ENCODE measurements at regions of chr6 and their contacts with region 1.

Region 1: DNA sequence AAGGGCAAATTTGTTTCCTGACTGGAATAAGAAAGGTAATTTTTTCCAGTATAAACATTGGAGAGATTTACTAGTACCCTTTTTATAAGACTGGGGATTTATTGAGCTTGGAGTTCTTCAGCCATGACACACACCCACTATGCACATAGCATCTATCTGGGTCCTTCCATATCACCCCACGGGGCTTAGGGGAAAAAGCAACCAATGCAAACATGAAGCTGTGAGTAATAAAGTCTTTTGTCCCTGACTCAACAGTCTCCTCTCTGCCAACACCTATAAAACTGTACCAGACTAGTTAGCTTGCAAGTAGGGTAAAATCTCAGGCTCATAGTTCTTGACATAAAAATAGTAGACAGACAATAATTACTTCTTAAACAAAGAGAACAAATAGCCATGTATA is 23.4 kb downstream of the COL21A1 start:
- DNase-seq: peak; percentile 60
- H3K27ac ChIP-seq: no peak overlapping the region
- CTCF ChIP-seq: no peak

Region 2: DNA sequence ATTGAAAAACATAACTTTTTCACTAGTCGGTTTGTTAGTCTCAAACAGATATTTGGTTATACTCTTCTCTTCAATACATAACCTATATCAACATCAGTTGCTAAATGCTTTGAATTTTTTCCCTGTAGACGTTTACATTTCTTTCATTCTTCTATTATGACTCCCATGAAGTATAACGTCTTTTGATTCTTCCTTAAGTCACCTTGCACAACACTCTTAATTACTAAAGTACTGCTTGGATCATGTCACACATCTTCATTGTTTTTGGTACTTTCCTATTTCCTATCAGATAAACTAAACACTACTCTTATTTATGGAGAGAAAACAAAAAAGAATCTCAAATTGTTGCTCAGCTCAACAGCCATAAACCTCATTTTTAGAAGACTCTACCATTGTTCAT is 325.7 kb before region 1 on chr6:
- CTCF ChIA-PET with region 1: no interaction called
- POLR2A ChIA-PET with region 1: no interaction called
- DNase-seq: peak; percentile 12
- H3K27ac ChIP-seq: no peak overlapping the region
- CTCF ChIP-seq: no peak

Region 3: DNA sequence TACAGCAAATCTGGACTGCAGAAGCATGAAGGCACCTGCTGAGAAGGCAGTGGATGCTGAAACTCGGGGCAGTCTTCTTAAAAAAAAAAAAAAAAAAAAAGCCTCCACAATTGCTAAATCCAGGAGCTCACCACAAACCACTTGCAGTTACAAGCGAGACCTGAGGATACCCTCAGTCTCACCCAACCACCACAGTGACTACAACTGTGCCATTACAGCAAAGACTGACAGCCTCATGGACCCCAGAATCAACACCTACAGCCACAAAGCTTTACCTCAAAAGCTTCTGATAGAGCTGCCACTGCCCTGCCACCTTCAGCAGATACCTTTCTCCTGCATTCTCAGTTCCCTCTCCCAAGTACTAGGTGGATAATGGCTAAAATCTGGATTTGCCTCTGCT is 14.4 kb after region 1 on chr6:
- CTCF ChIA-PET with region 1: interaction called, 4 read pairs
- POLR2A ChIA-PET with region 1: interaction called, 10 read pairs
- DNase-seq: no peak
- H3K27ac ChIP-seq: no peak overlapping the region
- CTCF ChIP-seq: no peak